ENCODE measurements at regions of chr17 and their contacts with region 1.

Region 1: GRCh38 chr17:82551779-82552457 is 32.4 kb downstream of the FOXK2 start:
- DNase-seq: peak; percentile 82
- H3K4me3 ChIP-seq: no peak overlapping the region
- H3K27ac ChIP-seq: peak overlapping the region; percentile 15 to 83 (median 63)
- H3K4me1 ChIP-seq: peaks cover 30 to 66% (median 49%) of the 10 kb centered on the region in 4 donors
- H3K27me3 ChIP-seq: no peaks in the 10 kb centered on the region
- CTCF ChIP-seq: peak; percentile 69 to 83 (median 76)
- EP300 ChIP-seq: no peak
- POLR2A ChIP-seq: no peak

Region 2: DNA sequence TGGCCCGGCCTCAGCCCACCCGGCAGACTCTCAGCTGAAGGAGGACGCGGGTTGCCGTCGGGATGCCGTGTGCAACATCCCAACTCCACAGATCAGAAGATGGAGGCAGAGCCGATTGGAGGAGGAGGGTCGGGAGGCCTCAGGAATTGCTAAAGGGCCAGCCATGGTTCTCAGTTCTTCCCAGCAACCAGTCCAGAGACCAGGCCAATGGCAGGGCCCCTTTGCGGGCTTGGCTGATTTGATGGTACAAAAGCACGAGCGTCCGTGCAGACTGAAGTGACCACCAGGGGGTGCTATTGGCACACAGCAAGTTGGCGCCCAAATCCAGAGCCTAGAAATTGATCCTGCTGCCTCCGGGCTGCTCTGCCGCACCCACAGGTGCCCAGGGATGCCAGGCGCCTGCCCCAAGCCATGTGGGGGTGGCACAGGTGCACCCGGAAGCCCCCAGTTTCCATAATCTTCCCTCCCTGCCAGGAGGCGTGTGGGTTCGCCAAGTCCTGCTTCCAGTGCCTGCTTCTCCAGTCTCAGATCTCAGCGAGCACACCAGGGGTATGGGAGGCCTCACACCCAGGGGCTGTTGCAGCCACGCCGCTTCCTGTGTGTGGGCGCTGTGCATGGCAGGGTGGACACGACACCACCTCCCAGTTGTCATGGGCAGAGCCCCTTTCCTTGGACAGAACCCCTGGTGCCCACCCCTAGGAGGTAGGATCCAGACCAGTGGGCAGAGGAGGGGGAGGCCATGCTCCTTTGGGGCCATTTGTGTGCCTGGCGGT is 200.0 kb before region 1 on chr17:
- in situ Hi-C with region 1: loop called in 1 of 4 experiments (anchors 10 kb)
- intact Hi-C with region 1: no loop called
- DNase-seq: peak; percentile 86
- H3K4me3 ChIP-seq: no peak overlapping the region
- H3K27ac ChIP-seq: peak overlapping the region in 1 of 4 donors; percentile 5
- H3K4me1 ChIP-seq: peaks cover 0 to 11% (median 1%) of the 10 kb centered on the region in 4 donors
- H3K27me3 ChIP-seq: peaks cover 36% of the 10 kb centered on the region
- CTCF ChIP-seq: peak; percentile 93 to 98 (median 95)
- EP300 ChIP-seq: no peak
- POLR2A ChIP-seq: no peak

Region 3: DNA sequence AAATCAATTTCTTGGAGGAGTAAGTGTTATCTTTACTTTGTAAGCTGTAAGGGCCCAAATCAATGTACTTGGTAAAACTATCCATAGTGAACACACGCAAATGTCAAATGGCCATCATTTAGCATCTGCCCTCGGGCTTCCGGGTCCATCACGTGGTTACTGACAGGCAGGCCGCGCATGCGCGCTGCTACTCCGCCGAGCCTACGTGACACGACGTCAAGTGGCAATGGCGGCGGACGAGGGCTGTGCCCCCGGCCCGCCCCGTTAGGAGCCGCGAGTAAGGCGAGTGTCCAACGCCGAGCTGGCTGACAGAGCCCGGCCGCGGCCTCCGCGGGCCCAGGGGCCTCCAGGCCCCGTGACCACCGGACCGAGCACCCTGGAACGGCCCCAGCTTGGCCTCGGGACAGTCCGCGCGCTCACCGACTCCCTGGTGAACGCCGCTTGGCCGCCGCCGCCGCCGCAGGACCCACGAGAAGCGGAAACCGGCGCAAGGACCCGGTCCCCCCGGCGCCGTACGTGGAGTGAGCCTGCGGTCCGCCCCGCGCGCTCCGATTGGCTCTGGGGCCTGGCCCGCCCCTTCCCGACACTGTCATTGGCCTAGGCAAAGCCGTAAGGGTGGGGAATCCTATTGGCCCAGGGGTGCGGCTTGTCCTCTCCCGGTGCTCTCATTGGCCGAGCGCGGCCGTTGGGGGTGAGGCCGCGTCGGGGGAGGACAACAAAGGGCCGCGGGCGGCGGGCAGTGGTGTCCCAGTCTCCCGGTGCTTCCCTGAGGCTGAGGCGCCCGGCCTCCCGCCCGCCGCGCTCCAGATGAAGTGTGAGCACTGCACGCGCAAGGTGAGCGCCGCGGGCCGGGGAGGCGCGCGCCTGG is 93.7 kb before region 1 on chr17 and contains the start of gene NARF:
- in situ Hi-C with region 1: no loop called
- intact Hi-C with region 1: loop called (anchors 5 kb)
- DNase-seq: peak; percentile 98
- H3K4me3 ChIP-seq: peak within 1 kb of the TSS; percentile 67 to 80 (median 70)
- H3K27ac ChIP-seq: peak within 1 kb of the TSS; percentile 99 to 100 (median 100)
- H3K4me1 ChIP-seq: peaks cover 10 to 25% (median 19%) of the 10 kb centered on the region in 4 donors
- H3K27me3 ChIP-seq: no peaks in the 10 kb centered on the region
- CTCF ChIP-seq: no peak
- EP300 ChIP-seq: peak; percentile 21
- POLR2A ChIP-seq: peak; percentile 99
- total RNA-seq, gene NARF: 44.1 to 133 (median 61.1) TPM

Region 4: DNA sequence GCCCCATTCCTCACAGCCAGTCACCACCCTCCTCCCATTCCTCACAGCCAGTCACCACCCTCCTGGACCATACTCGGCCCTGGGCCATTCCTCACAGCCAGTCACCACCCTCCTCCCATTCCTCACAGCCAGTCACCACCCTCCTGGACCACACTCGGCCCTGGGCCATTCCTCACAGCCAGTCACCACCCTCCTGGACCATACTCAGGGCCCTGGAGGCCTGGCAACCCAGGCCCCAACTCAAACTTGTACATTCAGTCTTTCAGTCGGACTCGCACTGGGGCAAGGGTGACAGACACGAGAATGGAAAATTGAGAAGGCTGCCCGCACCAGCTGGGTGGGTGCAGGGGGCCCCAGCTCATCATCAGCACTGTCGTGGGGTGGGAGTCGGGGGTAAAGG is 62.8 kb before region 1 on chr17:
- in situ Hi-C with region 1: loop called in 1 of 4 experiments (anchors 10 kb)
- intact Hi-C with region 1: loop called (anchors 10 kb)
- DNase-seq: no peak
- H3K4me3 ChIP-seq: no peak overlapping the region
- H3K27ac ChIP-seq: peak overlapping the region in 2 of 4 donors; percentile 17 to 39
- H3K4me1 ChIP-seq: peaks cover 0 to 19% (median 10%) of the 10 kb centered on the region in 4 donors
- H3K27me3 ChIP-seq: no peaks in the 10 kb centered on the region
- CTCF ChIP-seq: no peak
- EP300 ChIP-seq: no peak
- POLR2A ChIP-seq: no peak

Region 5: GRCh38 chr17:82494236-82495055 is 57.5 kb before region 1 on chr17:
- in situ Hi-C with region 1: loop called in 1 of 4 experiments (anchors 10 kb)
- intact Hi-C with region 1: loop called (anchors 10 kb)
- DNase-seq: peak; percentile 90
- H3K4me3 ChIP-seq: no peak overlapping the region
- H3K27ac ChIP-seq: peak overlapping the region; percentile 73 to 93 (median 81)
- H3K4me1 ChIP-seq: peaks cover 8 to 32% (median 24%) of the 10 kb centered on the region in 4 donors
- H3K27me3 ChIP-seq: no peaks in the 10 kb centered on the region
- CTCF ChIP-seq: peak; percentile 71 to 99 (median 88)
- EP300 ChIP-seq: no peak
- POLR2A ChIP-seq: no peak

Region 6: DNA sequence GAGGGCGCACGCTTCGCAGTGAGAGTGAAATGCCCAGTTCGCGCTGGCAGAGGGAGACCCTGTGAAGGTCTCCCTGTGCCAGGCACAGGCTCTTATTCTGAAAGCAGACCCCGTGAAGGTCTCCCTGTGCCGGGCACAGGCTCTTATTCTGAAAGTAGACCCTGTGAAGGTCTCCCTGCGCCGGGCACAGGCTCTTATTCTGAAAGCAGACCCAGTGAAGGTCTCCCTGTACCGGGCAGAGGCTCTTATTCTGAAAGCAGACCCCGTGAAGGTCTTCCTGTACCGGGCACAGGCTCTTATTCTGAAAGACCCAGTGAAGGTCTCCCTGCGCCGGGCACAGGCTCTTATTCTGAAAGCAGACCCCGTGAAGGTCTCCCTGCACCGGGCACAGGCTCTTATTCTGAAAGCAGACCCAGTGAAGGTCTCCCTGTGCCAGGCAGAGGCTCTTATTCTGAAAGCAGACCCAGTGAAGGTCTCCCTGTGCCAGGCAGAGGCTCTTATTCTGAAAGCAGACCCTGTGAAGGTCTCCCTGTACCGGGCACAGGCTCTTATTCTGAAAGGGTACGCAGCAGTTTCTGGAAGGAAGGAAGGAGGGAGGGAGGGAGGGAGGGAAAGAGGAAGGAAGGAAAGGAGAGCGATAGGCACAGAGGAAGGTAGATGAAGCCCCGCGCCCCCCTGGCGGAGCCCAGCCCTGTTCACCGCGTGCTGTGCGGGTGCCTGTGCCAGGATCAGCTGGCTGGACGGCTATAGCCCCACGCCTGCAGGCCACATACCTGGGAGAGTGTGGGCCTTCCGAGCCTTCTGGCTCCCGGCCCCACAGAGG is 41.1 kb after region 1 on chr17:
- in situ Hi-C with region 1: no loop called
- intact Hi-C with region 1: no loop called
- DNase-seq: peak; percentile 76
- H3K4me3 ChIP-seq: peak overlapping the region; percentile 45 to 61 (median 54)
- H3K27ac ChIP-seq: peak overlapping the region; percentile 91 to 98 (median 94)
- H3K4me1 ChIP-seq: peaks cover 18 to 63% (median 53%) of the 10 kb centered on the region in 4 donors
- H3K27me3 ChIP-seq: no peaks in the 10 kb centered on the region
- CTCF ChIP-seq: no peak
- EP300 ChIP-seq: no peak
- POLR2A ChIP-seq: peak; percentile 36